ENCODE measurements at regions of chr13 and their contacts with region 1.

Region 1: DNA sequence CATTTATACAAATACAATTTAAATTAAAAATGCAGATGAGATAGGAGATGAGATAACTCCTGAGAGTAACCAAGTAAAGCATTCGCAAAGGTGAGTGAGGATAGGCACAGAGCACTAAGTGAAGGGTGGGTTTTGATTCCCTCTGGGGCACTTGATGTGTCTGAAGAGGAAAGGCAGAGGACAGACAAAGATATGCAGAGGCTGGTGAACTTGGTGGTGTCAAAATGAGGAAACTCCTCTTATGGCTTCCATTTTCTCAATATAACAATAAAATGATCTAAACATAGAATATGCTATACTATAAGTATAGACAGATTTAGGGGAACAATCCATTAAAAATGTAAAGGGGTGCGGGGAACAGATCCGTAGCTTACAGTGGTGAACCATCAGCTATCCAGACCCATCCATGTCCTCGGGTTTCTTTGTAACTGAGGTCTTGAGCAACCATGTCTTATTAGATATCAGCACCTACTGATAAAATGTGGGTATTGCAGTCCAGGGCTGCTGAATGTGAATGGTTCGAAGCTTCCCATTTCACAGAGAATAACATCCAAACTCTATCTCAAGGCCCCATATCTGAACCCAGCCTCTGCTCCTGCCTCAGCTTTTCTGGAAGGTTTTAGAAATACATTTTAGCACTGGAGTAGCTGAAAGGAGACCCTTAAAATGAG is 73.9 kb upstream of the SLC10A2 start:
- DNase-seq: peak; percentile 4
- H3K4me3 ChIP-seq: no peak overlapping the region
- H3K27me3 ChIP-seq: no peaks in the 10 kb centered on the region
- CTCF ChIP-seq: peak; percentile 78

Region 2: GRCh38 chr13:102571075-102571474 is 569.1 kb before region 1 on chr13:
- CTCF ChIA-PET with region 1: no interaction called
- POLR2A ChIA-PET with region 1: no interaction called
- DNase-seq: no peak
- H3K4me3 ChIP-seq: no peak overlapping the region
- H3K27me3 ChIP-seq: peaks cover 6% of the 10 kb centered on the region
- CTCF ChIP-seq: no peak

Region 3: GRCh38 chr13:102913914-102914313 is 226.2 kb before region 1 on chr13:
- CTCF ChIA-PET with region 1: interaction called, 56 read pairs
- POLR2A ChIA-PET with region 1: no interaction called
- DNase-seq: no peak
- H3K4me3 ChIP-seq: no peak overlapping the region
- H3K27me3 ChIP-seq: no peaks in the 10 kb centered on the region
- CTCF ChIP-seq: no peak

Region 4: DNA sequence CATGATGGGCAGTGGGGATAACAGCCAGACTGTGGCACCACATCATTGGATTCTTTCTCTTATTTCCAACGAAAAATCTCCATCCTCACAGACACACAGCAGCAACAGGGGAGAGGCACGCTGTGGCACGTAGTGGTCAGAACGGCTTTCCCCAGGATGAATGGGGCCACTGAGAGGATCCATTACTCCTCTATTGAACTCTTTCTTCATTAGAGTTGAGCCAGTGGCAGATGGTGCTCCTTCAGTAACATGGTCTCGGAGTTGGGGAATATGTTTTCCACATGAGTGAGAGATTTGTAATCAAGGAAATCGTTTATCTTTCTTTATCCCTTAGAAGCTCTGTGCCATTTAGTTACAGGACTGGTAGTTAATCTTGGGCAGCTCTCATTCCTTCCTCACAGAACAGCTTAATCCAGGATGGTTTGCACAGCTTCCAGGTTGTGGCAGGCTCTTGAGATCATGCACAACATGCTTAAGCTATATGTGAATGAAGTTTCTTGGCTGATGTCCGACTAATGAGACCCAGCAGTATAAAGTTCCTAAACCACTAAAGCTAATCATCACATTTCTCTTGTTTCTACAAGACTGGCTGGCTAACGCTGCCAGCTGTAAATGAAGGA is 106.6 kb after region 1 on chr13:
- CTCF ChIA-PET with region 1: no interaction called
- POLR2A ChIA-PET with region 1: no interaction called
- DNase-seq: no peak
- H3K4me3 ChIP-seq: no peak overlapping the region
- H3K27me3 ChIP-seq: no peaks in the 10 kb centered on the region
- CTCF ChIP-seq: no peak

Measured in BJ (cell line).